ENCODE measurements at regions of chr20 and their contacts with region 1.

Region 1: DNA sequence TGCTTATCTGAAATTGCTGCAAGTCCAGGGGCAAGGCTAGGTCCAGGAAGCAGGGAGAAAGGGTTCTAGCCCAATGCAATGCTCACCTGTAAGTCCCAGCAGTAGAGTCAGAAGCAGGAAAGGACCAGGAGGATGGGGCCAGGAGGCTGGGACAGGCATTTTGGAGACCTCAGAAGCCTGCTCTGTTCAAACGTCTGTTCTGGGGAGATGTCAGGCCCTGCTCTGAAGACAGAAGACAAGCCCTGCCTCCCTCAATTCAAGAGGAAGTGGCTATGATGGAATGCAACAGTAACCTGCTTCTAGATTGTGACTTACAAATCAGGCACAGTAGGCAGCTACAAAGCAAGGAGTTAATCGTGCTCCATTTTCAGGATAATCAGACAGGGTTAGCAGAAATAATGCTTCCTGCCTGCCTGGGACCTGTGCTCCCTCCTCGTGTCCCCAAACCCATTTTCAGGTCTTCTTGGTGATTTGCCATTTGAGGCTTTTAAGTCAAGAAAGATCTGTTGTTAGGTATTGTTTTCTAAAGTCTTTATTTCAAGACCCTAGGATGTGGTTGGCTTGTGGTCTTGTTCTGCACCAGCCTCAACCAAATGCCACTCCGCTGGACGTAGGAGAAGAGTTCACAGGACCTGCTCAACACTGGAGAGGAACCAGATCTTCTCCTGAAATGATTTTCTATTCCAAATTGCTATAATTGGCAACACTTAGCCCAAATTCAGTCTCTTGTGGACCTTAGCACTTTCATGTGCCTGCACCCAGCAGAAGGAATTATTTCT is at the start of gene SIRPG:
- DNase-seq: peak in 6 of 9 donors; percentile 42 to 56 (median 48)
- ATAC-seq: peak; percentile 70
- H3K4me3 ChIP-seq: peak within 1 kb of the TSS; percentile 85
- H3K4me3 Mint-ChIP-seq: peak within 1 kb of the TSS; percentile 93 to 97 (median 96)
- H3K27ac ChIP-seq: peak within 1 kb of the TSS; percentile 87
- H3K27ac Mint-ChIP-seq: peak within 1 kb of the TSS; percentile 86 to 99 (median 95)
- H3K4me1 ChIP-seq: peaks cover 79 to 81% of the 10 kb centered on the region in 2 donors
- H3K4me1 Mint-ChIP-seq: peaks cover 46 to 95% (median 90%) of the 10 kb centered on the region in 7 donors
- H3K27me3 ChIP-seq: no peaks in the 10 kb centered on the region
- H3K27me3 Mint-ChIP-seq: no peaks in the 10 kb centered on the region
- total RNA-seq, gene SIRPG: 25.6 to 71.7 (median 50.2) TPM

Region 2: DNA sequence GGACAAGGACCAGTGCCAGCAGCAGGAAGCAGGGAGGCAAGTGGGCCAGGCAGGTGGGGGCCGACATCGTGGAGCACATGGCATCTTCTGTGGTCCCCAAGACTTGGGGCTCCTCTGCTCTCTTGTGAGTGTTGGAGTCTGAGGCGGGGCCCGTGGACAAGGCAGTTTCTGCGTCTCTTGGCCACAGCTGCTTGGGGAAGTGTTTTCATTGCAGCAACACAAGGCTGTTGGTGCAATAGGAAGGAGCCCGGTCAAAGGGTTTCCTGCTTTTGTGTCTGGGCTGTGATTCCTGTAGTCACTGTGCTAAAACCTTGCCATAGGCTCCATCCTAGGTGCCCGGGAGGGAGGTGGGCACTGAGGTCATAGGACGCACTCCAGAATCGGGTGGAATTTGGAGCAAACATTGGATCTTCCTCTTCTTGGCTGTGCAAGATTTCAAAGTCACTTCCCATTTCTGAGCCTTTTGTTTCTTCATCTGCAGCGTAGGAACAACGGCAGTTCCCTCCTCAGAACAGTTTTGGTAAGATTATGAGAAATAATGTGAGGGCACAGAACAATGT is 166.4 kb before region 1 on chr20 and contains the start of gene SIRPB2:
- CTCF ChIA-PET with region 1: no interaction called
- POLR2A ChIA-PET with region 1: no interaction called
- intact Hi-C with region 1: no loop called
- DNase-seq: no peak
- ATAC-seq: peak; percentile 64
- H3K4me3 ChIP-seq: no peak within 1 kb of the TSS
- H3K4me3 Mint-ChIP-seq: peak within 1 kb of the TSS in 1 of 10 donors; percentile 13
- H3K27ac ChIP-seq: no peak within 1 kb of the TSS
- H3K27ac Mint-ChIP-seq: peak within 1 kb of the TSS in 1 of 9 donors; percentile 37
- H3K4me1 ChIP-seq: peaks cover 0 to 12% of the 10 kb centered on the region in 2 donors
- H3K4me1 Mint-ChIP-seq: peaks cover 13 to 26% (median 20%) of the 10 kb centered on the region in 7 donors
- H3K27me3 ChIP-seq: no peaks in the 10 kb centered on the region
- H3K27me3 Mint-ChIP-seq: peaks cover 5 to 49% (median 16%) of the 10 kb centered on the region in 5 donors
- total RNA-seq, gene SIRPB2: 0.30 to 29.0 (median 1.1) TPM in 4 of 5 experiments, not detected in the other

Region 3: GRCh38 chr20:1636621-1637020 is 21.1 kb before region 1 on chr20:
- CTCF ChIA-PET with region 1: interaction called, 3 read pairs
- POLR2A ChIA-PET with region 1: interaction called, 3 read pairs
- intact Hi-C with region 1: loop called in 1 of 2 experiments (anchors 2 kb)
- DNase-seq: no peak
- ATAC-seq: no peak
- H3K4me3 ChIP-seq: no peak overlapping the region
- H3K4me3 Mint-ChIP-seq: no peak overlapping the region
- H3K27ac ChIP-seq: no peak overlapping the region
- H3K27ac Mint-ChIP-seq: peak overlapping the region in 5 of 9 donors; percentile 12 to 80 (median 75)
- H3K4me1 ChIP-seq: peaks cover 14 to 32% of the 10 kb centered on the region in 2 donors
- H3K4me1 Mint-ChIP-seq: peaks cover 24 to 60% (median 46%) of the 10 kb centered on the region in 7 donors
- H3K27me3 ChIP-seq: no peaks in the 10 kb centered on the region
- H3K27me3 Mint-ChIP-seq: no peaks in the 10 kb centered on the region

Region 4: GRCh38 chr20:1674361-1674760 is 16.6 kb after region 1 on chr20:
- CTCF ChIA-PET with region 1: no interaction called
- POLR2A ChIA-PET with region 1: interaction called, 171 read pairs
- intact Hi-C with region 1: loop called in 1 of 2 experiments (anchors 1 kb)
- DNase-seq: peak in 5 of 9 donors; percentile 34 to 55 (median 36)
- ATAC-seq: peak; percentile 76
- H3K4me3 ChIP-seq: peak overlapping the region; percentile 28
- H3K4me3 Mint-ChIP-seq: peak overlapping the region; percentile 55 to 87 (median 78)
- H3K27ac ChIP-seq: peak overlapping the region; percentile 68
- H3K27ac Mint-ChIP-seq: peak overlapping the region; percentile 80 to 97 (median 92)
- H3K4me1 ChIP-seq: peaks cover 67 to 84% of the 10 kb centered on the region in 2 donors
- H3K4me1 Mint-ChIP-seq: peaks cover 58 to 100% (median 98%) of the 10 kb centered on the region in 7 donors
- H3K27me3 ChIP-seq: no peaks in the 10 kb centered on the region
- H3K27me3 Mint-ChIP-seq: no peaks in the 10 kb centered on the region

Measured in naive thymus-derived CD4-positive, alpha-beta T cell (primary cell).